Dorsolateral prefrontal cortex (tissue), 120 donors: ENCODE measurements at regions of chr15 and their contacts with region 1.

Region 1: DNA sequence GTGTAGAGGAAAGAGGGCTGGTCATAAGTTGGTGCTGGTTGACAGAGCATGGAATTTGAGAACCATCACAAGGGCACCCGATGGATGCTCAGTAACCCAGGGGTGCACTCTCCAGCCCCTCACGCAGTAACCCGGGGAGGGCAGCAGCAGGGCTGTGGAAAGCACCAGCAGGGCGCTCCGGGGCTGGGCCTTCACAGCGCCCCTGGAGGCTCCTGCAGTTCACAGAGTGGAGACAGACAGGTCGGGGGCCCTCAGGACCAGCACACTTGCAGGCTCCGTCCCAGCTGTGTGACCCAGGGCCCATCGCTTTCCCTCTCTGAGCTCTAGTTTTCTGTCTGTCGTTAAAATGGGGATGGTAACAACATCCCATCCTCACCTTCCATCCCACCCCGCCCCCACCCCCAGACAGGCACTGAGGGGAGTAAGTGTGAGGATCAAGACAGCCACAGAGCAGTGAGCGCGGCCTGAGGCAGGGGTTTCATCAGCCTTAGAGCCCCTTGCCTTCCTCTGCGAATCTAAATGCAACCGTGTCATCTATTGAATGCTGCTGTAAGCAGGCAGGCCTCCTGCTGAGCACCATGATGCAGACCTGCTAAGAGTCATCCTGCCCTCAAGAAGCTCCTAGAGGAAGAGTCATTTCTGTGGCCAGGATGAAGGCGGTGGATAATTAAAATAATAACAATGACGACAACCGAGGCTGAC is 90.2 kb upstream of the LINGO1 start:
- DNase-seq: no peak
- H3K4me3 ChIP-seq: no peak overlapping the region
- H3K27ac ChIP-seq: peak overlapping the region in 40 of 59 donors; percentile 5 to 88 (median 60)
- H3K27me3 ChIP-seq: no peaks in the 10 kb centered on the region
- CTCF ChIP-seq: no peak

Region 2: GRCh38 chr15:77659350-77660321 is 63.3 kb before region 1 on chr15:
- intact Hi-C with region 1: loop called in 1 of 2 experiments (anchors 1 kb)
- DNase-seq: peak in 3 of 10 donors; percentile 65 to 72 (median 67)
- H3K4me3 ChIP-seq: no peak overlapping the region
- H3K27ac ChIP-seq: peak overlapping the region in 51 of 59 donors; percentile 1 to 95 (median 63)
- H3K27me3 ChIP-seq: no peaks in the 10 kb centered on the region
- CTCF ChIP-seq: peak in 53 of 56 donors; percentile 34 to 76 (median 56)

Region 3: GRCh38 chr15:77944002-77944867 is 221.3 kb after region 1 on chr15:
- intact Hi-C with region 1: no loop called
- DNase-seq: peak in 9 of 10 donors; percentile 46 to 83 (median 75)
- H3K4me3 ChIP-seq: peak overlapping the region; percentile 28 to 78 (median 64)
- H3K27ac ChIP-seq: peak overlapping the region in 45 of 59 donors; percentile 6 to 88 (median 68)
- H3K27me3 ChIP-seq: no peaks in the 10 kb centered on the region
- CTCF ChIP-seq: peak in 9 of 56 donors; percentile 8 to 40 (median 19)

Region 4: GRCh38 chr15:78276064-78276943 is 553.4 kb after region 1 on chr15:
- intact Hi-C with region 1: no loop called
- DNase-seq: no peak
- H3K4me3 ChIP-seq: no peak overlapping the region
- H3K27ac ChIP-seq: peak overlapping the region in 14 of 59 donors; percentile 11 to 58 (median 34)
- H3K27me3 ChIP-seq: no peaks in the 10 kb centered on the region
- CTCF ChIP-seq: no peak